Psoas muscle (tissue), 8 donors: ENCODE measurements at regions of chr6 and their contacts with region 1.

Region 1: GRCh38 chr6:110873981-110874879 is at the start of gene AMD1:
- DNase-seq: peak; percentile 97 to 98
- ATAC-seq: peak; percentile 81 to 87 (median 84)
- H3K4me3 ChIP-seq: peak within 1 kb of the TSS; percentile 93
- H3K27ac ChIP-seq: peak within 1 kb of the TSS; percentile 99
- H3K4me1 ChIP-seq: peaks cover 21% of the 10 kb centered on the region
- H3K27me3 ChIP-seq: no peaks in the 10 kb centered on the region
- CTCF ChIP-seq: peak; percentile 7
- total RNA-seq, gene AMD1: 19.2 to 46.6 (median 42.8) TPM

Region 2: GRCh38 chr6:110699780-110700179 is 174.4 kb before region 1 on chr6:
- intact Hi-C with region 1: no loop called
- DNase-seq: no peak
- ATAC-seq: no peak
- H3K4me3 ChIP-seq: no peak overlapping the region
- H3K27ac ChIP-seq: no peak overlapping the region
- H3K4me1 ChIP-seq: no peaks in the 10 kb centered on the region
- H3K27me3 ChIP-seq: no peaks in the 10 kb centered on the region
- CTCF ChIP-seq: no peak

Region 3: GRCh38 chr6:110815217-110816109 is 58.8 kb before region 1 on chr6 and contains the start of gene CDK19:
- intact Hi-C with region 1: loop called (anchors 1 to 2 kb)
- DNase-seq: peak; percentile 98 to 99
- ATAC-seq: peak; percentile 97 to 98 (median 98)
- H3K4me3 ChIP-seq: peak within 1 kb of the TSS; percentile 90
- H3K27ac ChIP-seq: peak within 1 kb of the TSS; percentile 90
- H3K4me1 ChIP-seq: peaks cover 9% of the 10 kb centered on the region
- H3K27me3 ChIP-seq: no peaks in the 10 kb centered on the region
- CTCF ChIP-seq: no peak
- total RNA-seq, gene CDK19: 4.7 to 11.6 (median 5.6) TPM

Region 4: DNA sequence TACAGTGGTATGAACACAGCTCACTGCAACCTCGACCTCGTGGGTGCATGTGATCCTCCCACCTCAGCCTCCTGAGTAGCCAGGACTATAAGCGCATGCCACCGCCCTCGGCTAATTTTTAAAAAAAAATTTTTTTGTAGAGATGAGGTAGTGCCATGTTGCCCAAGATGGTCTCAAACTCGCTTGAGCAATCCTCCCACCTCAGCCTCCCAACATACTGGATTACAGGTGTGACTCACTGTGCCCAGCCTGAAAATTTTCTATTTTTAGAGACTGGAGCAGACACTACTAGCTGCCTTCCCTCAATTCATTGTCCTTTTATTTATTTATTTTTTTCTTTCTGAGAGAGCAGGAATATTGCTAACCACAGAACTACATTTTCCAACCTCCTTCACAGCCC is 63.9 kb after region 1 on chr6:
- intact Hi-C with region 1: no loop called
- DNase-seq: no peak
- ATAC-seq: peak in 2 of 4 donors; percentile 38 to 51
- H3K4me3 ChIP-seq: no peak overlapping the region
- H3K27ac ChIP-seq: no peak overlapping the region
- H3K4me1 ChIP-seq: no peaks in the 10 kb centered on the region
- H3K27me3 ChIP-seq: no peaks in the 10 kb centered on the region
- CTCF ChIP-seq: no peak

Region 5: DNA sequence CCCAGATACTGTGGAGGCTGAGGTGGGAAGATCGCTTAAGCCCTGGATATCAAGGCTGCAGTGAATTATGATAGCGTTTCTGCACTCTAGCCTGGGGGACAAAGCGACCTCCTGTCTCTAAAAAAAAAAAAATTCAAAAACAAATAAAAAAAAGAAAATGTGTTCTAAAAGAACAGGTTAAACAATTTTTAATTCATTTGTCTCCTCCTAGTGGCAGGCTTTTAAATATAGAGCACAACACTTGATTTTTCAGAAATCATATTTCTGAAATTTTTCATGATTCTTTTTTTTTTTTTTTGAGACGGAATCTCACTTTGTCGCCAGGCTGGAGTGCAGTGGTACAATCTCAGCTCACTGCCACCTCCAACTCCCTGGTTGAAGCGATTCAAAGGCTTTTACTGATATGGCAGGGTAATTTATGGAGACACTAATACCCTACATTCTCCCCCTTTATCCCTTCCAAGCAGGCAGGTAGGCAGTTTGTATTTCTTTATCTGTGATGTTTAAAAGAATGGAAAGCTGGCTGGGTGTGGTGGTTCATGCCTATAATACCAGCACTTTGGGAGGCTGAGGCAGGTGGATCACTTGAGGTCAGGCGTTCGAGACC is 75.6 kb after region 1 on chr6:
- intact Hi-C with region 1: loop called in 1 of 2 experiments (anchors 5 kb)
- DNase-seq: no peak
- ATAC-seq: peak in 1 of 4 donors; percentile 65
- H3K4me3 ChIP-seq: no peak overlapping the region
- H3K27ac ChIP-seq: no peak overlapping the region
- H3K4me1 ChIP-seq: no peaks in the 10 kb centered on the region
- H3K27me3 ChIP-seq: no peaks in the 10 kb centered on the region
- CTCF ChIP-seq: peak; percentile 57

Region 6: DNA sequence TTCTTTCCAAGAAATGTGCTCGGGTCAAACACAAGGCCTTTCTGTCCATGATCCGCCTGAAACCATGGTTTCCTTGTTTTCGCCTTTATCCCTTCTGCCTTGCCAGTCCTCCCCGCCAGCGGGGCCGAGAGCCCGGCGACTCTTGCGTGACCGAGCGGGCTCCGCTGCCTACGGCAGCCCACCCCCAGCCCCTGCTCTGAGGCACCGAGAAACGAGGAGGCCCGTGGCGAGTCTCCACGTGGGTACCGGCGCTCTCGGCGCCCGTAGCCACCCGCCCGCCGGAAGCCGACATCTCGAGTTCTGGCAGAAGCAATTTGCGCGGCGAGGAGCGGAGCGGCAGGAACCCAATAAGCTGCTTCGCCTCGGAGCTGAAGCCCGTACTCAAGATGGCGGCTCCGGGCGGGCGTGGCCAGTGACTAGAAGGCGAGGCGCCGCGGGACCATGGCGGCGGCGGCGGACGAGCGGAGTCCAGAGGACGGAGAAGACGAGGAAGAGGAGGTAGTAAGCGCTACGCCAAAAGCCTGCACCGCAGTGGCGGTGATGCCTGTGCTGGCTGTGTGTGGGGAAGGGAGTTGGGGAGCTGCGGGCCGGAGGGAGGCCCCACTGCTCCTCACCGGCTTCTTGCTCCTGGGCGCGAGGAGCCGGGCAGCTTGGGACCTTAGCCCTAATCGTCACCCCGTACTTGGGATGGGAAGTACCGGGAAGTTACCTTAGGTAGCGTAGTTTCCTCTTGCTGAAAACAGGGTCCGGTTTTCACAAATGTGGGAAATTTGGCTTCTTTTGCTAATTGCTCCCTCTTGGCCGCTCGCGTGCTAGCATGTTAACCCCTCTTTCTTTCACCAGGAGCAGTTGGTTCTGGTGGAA is 84.3 kb after region 1 on chr6 and contains the start of gene GTF3C6:
- intact Hi-C with region 1: loop called (anchors 5 kb)
- DNase-seq: peak; percentile 94 to 97
- ATAC-seq: peak; percentile 98 to 99 (median 98)
- H3K4me3 ChIP-seq: peak within 1 kb of the TSS; percentile 97
- H3K27ac ChIP-seq: peak within 1 kb of the TSS; percentile 98
- H3K4me1 ChIP-seq: peaks cover 7% of the 10 kb centered on the region
- H3K27me3 ChIP-seq: no peaks in the 10 kb centered on the region
- CTCF ChIP-seq: no peak
- total RNA-seq, gene GTF3C6: 112 to 143 (median 127) TPM